ENCODE measurements at regions of chr1 and their contacts with region 1.

Region 1: DNA sequence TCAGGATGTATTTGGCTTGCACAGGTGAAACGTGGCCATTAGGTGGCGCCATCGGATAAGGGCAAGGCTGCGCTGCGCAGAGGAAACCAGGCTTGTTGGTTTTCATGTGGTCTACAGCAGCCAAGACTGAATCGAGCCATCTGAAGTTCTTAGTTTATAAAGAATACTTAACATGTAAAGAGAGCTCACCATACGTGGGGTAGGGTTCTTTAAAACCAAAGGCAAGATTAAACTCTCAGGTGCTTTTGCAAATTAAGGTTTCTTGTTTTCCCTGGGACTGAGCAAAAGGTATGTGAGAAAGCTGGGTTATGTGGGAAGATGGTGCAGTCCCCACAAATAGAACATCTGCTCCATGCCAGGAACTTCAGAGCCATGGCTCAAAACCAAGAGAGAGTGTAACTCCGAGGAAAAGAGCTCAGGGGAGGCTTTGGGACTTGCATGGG is 9.3 kb downstream of the MASP2 start:
- H3K4me3 ChIP-seq: no peak overlapping the region
- H3K27ac ChIP-seq: no peak overlapping the region
- H3K4me1 ChIP-seq: no peaks in the 10 kb centered on the region
- CTCF ChIP-seq: peak; percentile 94

Region 2: DNA sequence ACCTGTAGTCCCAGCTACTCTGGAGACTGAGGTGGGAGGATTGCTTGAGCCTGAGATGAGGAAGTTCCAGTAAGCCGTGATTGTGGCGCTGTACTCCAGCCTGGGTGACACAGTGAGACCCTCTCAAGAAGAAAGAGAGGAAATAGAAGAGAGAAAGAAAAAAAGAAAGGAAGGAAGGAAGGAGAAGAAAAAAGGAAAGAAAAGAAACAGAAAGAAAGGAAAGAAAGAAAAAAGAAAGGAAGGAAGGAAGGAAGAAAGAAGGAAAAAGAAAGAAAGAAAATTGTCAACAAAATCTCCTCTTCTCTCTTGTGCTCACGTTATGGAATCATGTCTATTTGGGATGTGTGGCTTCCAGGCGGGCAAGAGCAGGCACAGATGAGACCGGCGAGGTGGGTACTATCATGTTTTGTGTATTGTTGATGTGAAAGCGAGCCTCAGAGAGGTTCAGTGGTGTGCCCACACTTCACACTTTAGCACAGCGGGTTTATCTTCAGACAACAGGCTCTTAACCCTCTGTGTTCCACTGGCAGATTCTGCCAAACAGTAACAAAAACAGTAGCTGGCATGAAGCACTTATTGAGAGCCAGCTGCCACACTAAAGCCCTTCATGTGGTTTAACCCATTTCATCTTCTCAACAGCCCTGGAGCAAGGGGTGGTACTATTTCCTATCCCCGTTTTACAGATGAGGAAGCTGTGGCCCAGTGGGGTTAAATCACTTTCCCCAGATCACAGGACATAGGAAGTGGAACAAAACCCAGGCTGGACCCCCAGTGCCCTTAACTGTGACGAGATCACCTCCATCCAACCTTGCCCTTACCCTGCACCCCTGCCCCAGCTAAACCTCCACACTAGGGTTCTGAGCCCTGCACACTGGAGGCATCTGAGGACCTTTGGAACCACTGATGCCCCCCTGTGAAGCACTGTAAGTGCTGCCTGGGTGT is 120.0 kb before region 1 on chr1:
- CTCF ChIA-PET with region 1: no interaction called
- POLR2A ChIA-PET with region 1: no interaction called
- H3K4me3 ChIP-seq: no peak overlapping the region
- H3K27ac ChIP-seq: no peak overlapping the region
- H3K4me1 ChIP-seq: no peaks in the 10 kb centered on the region
- CTCF ChIP-seq: no peak

Region 3: GRCh38 chr1:11051781-11052511 is 14.2 kb after region 1 on chr1:
- CTCF ChIA-PET with region 1: interaction called, 47 read pairs
- POLR2A ChIA-PET with region 1: no interaction called
- H3K4me3 ChIP-seq: no peak overlapping the region
- H3K27ac ChIP-seq: no peak overlapping the region
- H3K4me1 ChIP-seq: no peaks in the 10 kb centered on the region
- CTCF ChIP-seq: no peak

Region 4: GRCh38 chr1:11065796-11066195 is 28.0 kb after region 1 on chr1:
- CTCF ChIA-PET with region 1: interaction called, 43 read pairs
- POLR2A ChIA-PET with region 1: interaction called, 4 read pairs
- H3K4me3 ChIP-seq: no peak overlapping the region
- H3K27ac ChIP-seq: no peak overlapping the region
- H3K4me1 ChIP-seq: no peaks in the 10 kb centered on the region
- CTCF ChIP-seq: no peak

Region 5: GRCh38 chr1:11099310-11100149 is 61.8 kb after region 1 on chr1 and contains the start of gene EXOSC10:
- CTCF ChIA-PET with region 1: interaction called, 16 read pairs
- POLR2A ChIA-PET with region 1: no interaction called
- H3K4me3 ChIP-seq: peak within 1 kb of the TSS; percentile 76
- H3K27ac ChIP-seq: peak within 1 kb of the TSS; percentile 89
- H3K4me1 ChIP-seq: peaks cover 3% of the 10 kb centered on the region; the same call in 1 of the 2 replicates
- CTCF ChIP-seq: no peak

Region 6: GRCh38 chr1:11178021-11179015 is 140.6 kb after region 1 on chr1:
- CTCF ChIA-PET with region 1: interaction called, 19 read pairs
- POLR2A ChIA-PET with region 1: no interaction called
- H3K4me3 ChIP-seq: no peak overlapping the region
- H3K27ac ChIP-seq: no peak overlapping the region
- H3K4me1 ChIP-seq: peaks cover 11% of the 10 kb centered on the region
- CTCF ChIP-seq: no peak

Region 7: GRCh38 chr1:11248155-11248554 is 210.4 kb after region 1 on chr1:
- CTCF ChIA-PET with region 1: interaction called, 19 read pairs
- POLR2A ChIA-PET with region 1: no interaction called
- H3K4me3 ChIP-seq: no peak overlapping the region
- H3K27ac ChIP-seq: no peak overlapping the region
- H3K4me1 ChIP-seq: no peaks in the 10 kb centered on the region
- CTCF ChIP-seq: no peak

Region 8: GRCh38 chr1:11373895-11374747 is 336.4 kb after region 1 on chr1:
- CTCF ChIA-PET with region 1: no interaction called
- POLR2A ChIA-PET with region 1: no interaction called
- H3K4me3 ChIP-seq: no peak overlapping the region
- H3K27ac ChIP-seq: no peak overlapping the region
- H3K4me1 ChIP-seq: no peaks in the 10 kb centered on the region; the same call in 1 of the 2 replicates
- CTCF ChIP-seq: no peak

Region 9: DNA sequence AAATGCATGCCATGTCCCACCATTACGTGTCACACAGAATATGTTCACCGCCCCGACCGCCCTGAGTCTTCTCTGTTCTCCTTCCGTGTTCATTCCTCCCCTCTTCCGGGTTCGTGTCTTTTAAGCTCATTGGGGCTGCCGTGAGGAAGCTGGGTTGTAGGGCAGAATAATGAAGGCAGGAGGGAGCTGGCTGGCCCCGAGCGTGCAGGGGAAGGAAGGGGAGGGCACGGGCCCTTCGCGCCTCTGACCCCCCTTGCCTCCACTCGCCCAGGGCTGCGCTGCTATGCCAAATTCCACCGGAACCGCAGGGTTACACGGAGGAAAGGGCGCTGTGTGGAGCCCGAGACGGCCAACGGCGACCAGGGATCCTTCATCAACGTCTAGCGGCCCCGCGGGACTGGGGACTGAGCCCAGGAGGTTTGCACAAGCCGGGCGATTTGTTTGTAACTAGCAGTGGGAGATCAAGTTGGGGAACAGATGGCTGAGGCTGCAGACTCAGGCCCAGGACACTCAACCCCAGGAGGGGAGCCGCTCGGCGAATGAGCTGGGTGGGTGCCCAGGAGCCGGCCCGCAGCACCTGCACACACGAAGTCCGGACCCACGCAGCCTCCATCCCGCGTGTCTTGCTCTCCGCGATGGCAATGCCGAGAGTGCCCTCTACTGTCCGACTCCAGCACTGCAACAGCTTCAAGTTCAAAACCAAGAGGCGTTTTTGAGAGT is 681.7 kb after region 1 on chr1:
- CTCF ChIA-PET with region 1: interaction called, 13 read pairs
- POLR2A ChIA-PET with region 1: no interaction called
- H3K4me3 ChIP-seq: peak overlapping the region; percentile 11
- H3K27ac ChIP-seq: no peak overlapping the region
- H3K4me1 ChIP-seq: no peaks in the 10 kb centered on the region
- CTCF ChIP-seq: peak; percentile 93

Measured in HEK293 (cell line).